Gastrocnemius medialis (tissue), 4 donors: ENCODE measurements at regions of chr18 and their contacts with region 1.

Region 1: DNA sequence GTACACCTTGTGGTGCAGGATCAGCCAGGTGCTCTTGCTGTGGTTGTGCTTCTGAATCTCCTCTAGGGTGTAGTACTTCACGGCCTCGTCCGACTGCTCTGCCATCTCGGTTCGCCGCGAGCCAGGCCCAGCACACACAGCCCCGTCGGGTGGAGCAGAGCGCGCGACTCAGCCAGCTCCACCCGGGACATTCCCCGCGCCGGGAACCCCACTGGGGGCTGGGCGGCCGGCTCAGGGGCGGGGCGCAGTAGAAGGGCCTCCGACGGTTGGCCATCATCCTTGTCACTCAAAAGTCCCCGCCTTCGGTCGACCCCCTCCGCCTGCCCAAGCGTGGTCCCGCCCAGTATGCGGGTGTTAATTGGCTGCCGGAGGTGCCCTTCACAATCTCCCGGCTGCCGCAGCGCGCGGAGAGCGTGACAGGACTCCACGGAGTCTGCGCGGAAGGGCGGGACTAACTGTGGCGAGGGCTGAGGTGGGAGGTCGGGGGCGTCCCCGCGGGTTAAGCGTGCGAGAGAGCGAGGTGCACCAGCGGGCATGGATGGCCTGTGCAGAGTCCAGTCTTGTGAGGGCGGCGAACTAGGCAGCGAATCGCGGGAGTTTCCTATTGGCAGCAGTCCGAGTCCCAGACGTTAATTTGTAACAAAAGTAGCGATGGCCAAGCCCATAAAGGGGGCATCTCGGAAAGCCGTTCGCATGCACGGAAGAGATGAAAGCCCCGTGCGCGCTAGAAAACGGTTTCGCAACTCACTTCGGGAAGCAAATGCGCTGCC is at the start of gene CYB5A:
- DNase-seq: peak; percentile 97 to 98
- ATAC-seq: peak; percentile 99 to 100
- H3K4me3 ChIP-seq: peak within 1 kb of the TSS; percentile 75 to 96 (median 94)
- H3K27ac ChIP-seq: peak within 1 kb of the TSS; percentile 57 to 83 (median 70)
- H3K4me1 ChIP-seq: peaks cover 2 to 10% of the 10 kb centered on the region in 2 donors
- H3K27me3 ChIP-seq: no peaks in the 10 kb centered on the region
- CTCF ChIP-seq: no peak
- POLR2A ChIP-seq: no peak
- total RNA-seq, gene CYB5A: 21.4 to 29.4 (median 23.4) TPM

Region 2: GRCh38 chr18:73766910-73767515 is 524.9 kb before region 1 on chr18:
- in situ Hi-C with region 1: no loop called
- intact Hi-C with region 1: no loop called
- DNase-seq: no peak
- ATAC-seq: no peak
- H3K4me3 ChIP-seq: no peak overlapping the region
- H3K27ac ChIP-seq: no peak overlapping the region
- H3K4me1 ChIP-seq: no peaks in the 10 kb centered on the region
- H3K27me3 ChIP-seq: no peaks in the 10 kb centered on the region
- CTCF ChIP-seq: no peak
- POLR2A ChIP-seq: no peak

Region 3: DNA sequence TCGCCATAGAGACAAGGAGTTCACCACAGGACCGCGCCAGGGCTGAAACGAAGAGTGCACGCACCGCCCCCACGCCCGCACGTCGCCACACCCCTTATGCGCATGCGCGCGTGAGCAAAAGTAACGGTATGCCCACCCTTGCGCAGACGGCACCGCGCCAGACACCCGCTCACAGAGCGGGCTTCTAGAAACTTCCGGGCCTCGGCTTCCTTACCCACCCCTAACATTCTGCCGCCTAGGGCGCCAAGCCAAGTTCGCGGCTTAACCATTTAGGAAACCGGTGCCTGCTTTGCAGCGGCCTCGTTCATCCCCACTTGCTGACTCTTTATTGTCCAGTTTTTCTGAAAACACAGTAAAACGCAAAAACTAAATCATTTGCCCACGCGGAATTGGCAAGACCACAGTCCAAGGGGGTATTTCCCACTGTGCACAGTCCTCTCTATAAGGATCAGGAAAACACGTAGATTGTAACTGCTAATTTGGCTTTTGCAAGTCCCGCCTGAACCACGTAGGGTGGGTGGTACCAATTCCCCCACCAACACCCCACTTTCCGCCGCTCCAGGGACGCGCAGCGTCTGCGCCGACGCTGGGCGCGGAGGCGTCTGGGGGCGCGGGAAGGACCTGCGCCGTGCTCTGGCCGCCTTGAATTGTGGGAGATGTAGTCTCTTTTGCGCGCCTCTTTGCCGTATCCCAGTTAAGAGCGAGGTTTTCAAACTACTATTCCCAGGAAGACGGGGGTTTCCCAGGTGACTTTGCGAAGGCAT is 144.0 kb before region 1 on chr18 and contains the starts of genes FBXO15 and TIMM21:
- in situ Hi-C with region 1: no loop called
- intact Hi-C with region 1: loop called (anchors 2 kb)
- DNase-seq: peak; percentile 94 to 97
- ATAC-seq: peak; percentile 97 to 98
- H3K4me3 ChIP-seq: peak within 1 kb of the TSS; percentile 63 to 95 (median 81)
- H3K27ac ChIP-seq: peak within 1 kb of the TSS; percentile 89 to 94 (median 92)
- H3K4me1 ChIP-seq: peaks cover 30 to 45% of the 10 kb centered on the region in 2 donors
- H3K27me3 ChIP-seq: no peaks in the 10 kb centered on the region
- CTCF ChIP-seq: no peak
- POLR2A ChIP-seq: peak; percentile 79 to 85
- total RNA-seq, gene FBXO15: not detected
- total RNA-seq, gene TIMM21: 40.0 to 108 (median 75.8) TPM

Region 4: GRCh38 chr18:74489676-74490075 is 197.7 kb after region 1 on chr18:
- in situ Hi-C with region 1: no loop called
- intact Hi-C with region 1: no loop called
- DNase-seq: no peak
- ATAC-seq: no peak
- H3K4me3 ChIP-seq: no peak overlapping the region
- H3K27ac ChIP-seq: no peak overlapping the region
- H3K4me1 ChIP-seq: no peaks in the 10 kb centered on the region
- H3K27me3 ChIP-seq: no peaks in the 10 kb centered on the region
- CTCF ChIP-seq: no peak
- POLR2A ChIP-seq: no peak

Region 5: GRCh38 chr18:74597662-74598349 is 305.9 kb after region 1 on chr18 and contains the start of gene ZNF407:
- in situ Hi-C with region 1: no loop called
- intact Hi-C with region 1: loop called (anchors 5 kb)
- DNase-seq: peak; percentile 80 to 81
- ATAC-seq: peak; percentile 93
- H3K4me3 ChIP-seq: peak within 1 kb of the TSS; percentile 81 to 97 (median 94)
- H3K27ac ChIP-seq: peak within 1 kb of the TSS; percentile 91 to 98 (median 94)
- H3K4me1 ChIP-seq: peaks cover 39 to 42% of the 10 kb centered on the region in 2 donors
- H3K27me3 ChIP-seq: no peaks in the 10 kb centered on the region
- CTCF ChIP-seq: peak in 1 of 5 experiments; percentile 37
- POLR2A ChIP-seq: peak in 1 of 2 donors; percentile 3
- total RNA-seq, gene ZNF407: 5.9 to 11.4 (median 9.2) TPM

Region 6: DNA sequence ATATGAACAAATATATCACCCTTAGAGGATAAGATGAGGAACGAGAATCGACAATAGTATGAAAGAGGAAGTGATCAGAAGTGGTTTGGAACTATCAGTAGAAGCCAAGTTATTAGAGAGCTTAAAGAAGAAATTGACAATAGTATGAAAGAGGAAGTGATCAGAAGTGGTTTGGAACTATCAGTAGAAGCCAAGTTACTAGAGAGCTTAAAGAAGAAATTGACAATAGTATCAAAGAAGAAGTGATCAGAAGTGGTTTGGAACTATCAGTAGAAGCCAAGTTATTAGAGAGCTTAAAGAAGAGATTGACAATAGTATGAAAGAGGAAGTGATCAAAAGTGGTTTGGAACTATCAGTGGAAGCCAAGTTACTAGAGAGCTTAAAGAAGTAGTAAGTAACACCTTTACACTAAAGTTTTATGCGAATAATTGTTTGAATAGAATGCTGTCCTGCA is 481.2 kb after region 1 on chr18:
- in situ Hi-C with region 1: no loop called
- intact Hi-C with region 1: no loop called
- DNase-seq: no peak
- ATAC-seq: no peak
- H3K4me3 ChIP-seq: no peak overlapping the region
- H3K27ac ChIP-seq: no peak overlapping the region
- H3K4me1 ChIP-seq: peaks cover 0 to 1% of the 10 kb centered on the region in 2 donors
- H3K27me3 ChIP-seq: no peaks in the 10 kb centered on the region
- CTCF ChIP-seq: no peak
- POLR2A ChIP-seq: no peak